ENCODE measurements at regions of chr5 and their contacts with region 1.

Region 1: GRCh38 chr5:60677844-60678664 is 21.9 kb downstream of the DEPDC1B start:
- DNase-seq: no peak
- ATAC-seq: peak; percentile 78; the same call in 1 of the 2 replicates
- H3K4me3 ChIP-seq: no peak overlapping the region
- H3K27ac ChIP-seq: no peak overlapping the region
- H3K4me1 ChIP-seq: no peaks in the 10 kb centered on the region
- H3K27me3 ChIP-seq: no peaks in the 10 kb centered on the region
- CTCF ChIP-seq: peak; percentile 61; the same call in 1 of the 2 replicates

Region 2: DNA sequence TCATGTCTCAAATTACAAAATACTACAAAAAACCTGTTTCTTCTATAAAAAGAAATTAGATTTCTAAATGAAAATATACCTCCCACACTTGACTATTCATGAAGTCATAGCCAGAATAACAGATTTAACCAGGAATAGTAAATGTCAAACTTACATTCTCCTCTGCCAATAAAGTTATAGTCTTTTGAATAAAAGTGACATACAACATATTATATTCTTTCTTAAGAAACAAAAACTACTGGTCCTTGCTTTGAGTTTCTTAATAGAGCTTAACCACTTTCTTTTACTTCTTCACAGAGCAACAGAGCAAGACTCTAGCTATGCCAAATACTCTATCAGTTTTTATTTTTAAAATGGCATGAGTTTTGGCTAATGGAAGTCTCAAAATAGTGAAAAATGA is 39.8 kb before region 1 on chr5:
- CTCF ChIA-PET with region 1: interaction called, 10 read pairs
- POLR2A ChIA-PET with region 1: no interaction called
- in situ Hi-C with region 1: no loop called
- intact Hi-C with region 1: no loop called
- DNase-seq: no peak
- ATAC-seq: no peak
- H3K4me3 ChIP-seq: no peak overlapping the region
- H3K27ac ChIP-seq: no peak overlapping the region
- H3K4me1 ChIP-seq: no peaks in the 10 kb centered on the region
- H3K27me3 ChIP-seq: no peaks in the 10 kb centered on the region
- CTCF ChIP-seq: no peak

Region 3: DNA sequence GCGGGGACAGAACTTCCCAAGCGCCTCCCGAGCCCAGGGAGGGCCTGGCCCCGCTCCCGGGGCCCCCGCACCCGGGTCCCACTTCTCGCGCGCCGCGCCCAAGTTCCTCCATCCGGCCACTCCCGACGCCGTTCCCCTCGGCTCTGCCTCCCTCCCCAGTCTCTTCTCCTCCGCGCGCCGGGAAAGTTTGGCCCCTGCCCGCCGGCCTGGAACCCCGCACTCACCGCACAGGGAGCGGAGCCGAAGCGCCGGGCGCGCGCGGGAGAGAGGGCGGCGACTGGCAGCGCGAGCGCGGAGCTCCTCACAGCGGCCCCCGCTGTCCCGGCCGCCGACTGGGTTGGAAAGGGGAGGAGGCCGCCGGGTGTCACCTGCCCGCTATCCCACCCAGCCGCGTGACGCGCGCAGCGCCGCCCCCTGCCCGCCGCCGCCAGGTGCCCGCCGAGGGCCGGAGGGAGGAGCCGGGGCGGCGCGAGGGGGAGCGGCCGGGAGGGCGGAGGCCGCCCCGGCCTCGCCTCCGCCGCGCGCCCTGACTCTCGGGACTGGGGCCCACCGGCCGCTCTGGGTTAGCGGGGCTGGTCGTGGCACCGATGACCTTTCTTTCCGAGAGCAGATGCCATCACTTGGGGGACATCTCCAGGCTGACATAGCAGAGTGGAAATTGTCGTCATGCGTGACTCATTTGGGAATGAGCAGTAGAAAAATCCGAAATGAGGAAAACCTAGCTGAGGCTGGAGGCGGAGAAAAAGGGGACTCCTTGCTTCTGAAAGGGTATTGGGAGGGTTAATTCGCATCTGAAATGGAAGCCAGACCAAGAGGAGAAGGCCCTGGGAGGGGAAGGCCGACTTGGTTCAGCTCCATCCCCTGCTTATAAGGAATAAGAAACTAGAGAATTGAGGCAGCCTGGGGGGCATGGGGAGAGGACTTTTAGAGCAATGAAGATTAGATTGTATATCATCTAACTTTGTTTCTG is 166.2 kb after region 1 on chr5 and contains the start of gene ELOVL7:
- CTCF ChIA-PET with region 1: no interaction called
- POLR2A ChIA-PET with region 1: no interaction called
- in situ Hi-C with region 1: no loop called
- intact Hi-C with region 1: loop called (anchors 5 kb)
- DNase-seq: no peak
- ATAC-seq: peak; percentile 94
- H3K4me3 ChIP-seq: peak within 1 kb of the TSS; percentile 59 to 69
- H3K27ac ChIP-seq: no peak within 1 kb of the TSS
- H3K4me1 ChIP-seq: no peaks in the 10 kb centered on the region
- H3K27me3 ChIP-seq: peaks cover 27% of the 10 kb centered on the region
- CTCF ChIP-seq: peak; percentile 78
- total RNA-seq, gene ELOVL7: 2.9 TPM

Measured in Panc1 (cell line).